ENCODE measurements at regions of chr1 and their contacts with region 1.

Region 1: GRCh38 chr1:89780721-89781120 is 40.1 kb upstream of the LRRC8D start:
- DNase-seq: peak; percentile 39
- ATAC-seq: peak; percentile 92
- H3K4me3 ChIP-seq: no peak overlapping the region
- H3K27ac ChIP-seq: no peak overlapping the region
- H3K4me1 ChIP-seq: no peaks in the 10 kb centered on the region; a peak in 1 of 4 replicates
- H3K27me3 ChIP-seq: no peaks in the 10 kb centered on the region
- CTCF ChIP-seq: peak; percentile 29 to 61 (median 54); a peak in 5 of 6 replicates
- POLR2A ChIP-seq: no peak
- RAD21 ChIP-seq: peak; percentile 77

Region 2: DNA sequence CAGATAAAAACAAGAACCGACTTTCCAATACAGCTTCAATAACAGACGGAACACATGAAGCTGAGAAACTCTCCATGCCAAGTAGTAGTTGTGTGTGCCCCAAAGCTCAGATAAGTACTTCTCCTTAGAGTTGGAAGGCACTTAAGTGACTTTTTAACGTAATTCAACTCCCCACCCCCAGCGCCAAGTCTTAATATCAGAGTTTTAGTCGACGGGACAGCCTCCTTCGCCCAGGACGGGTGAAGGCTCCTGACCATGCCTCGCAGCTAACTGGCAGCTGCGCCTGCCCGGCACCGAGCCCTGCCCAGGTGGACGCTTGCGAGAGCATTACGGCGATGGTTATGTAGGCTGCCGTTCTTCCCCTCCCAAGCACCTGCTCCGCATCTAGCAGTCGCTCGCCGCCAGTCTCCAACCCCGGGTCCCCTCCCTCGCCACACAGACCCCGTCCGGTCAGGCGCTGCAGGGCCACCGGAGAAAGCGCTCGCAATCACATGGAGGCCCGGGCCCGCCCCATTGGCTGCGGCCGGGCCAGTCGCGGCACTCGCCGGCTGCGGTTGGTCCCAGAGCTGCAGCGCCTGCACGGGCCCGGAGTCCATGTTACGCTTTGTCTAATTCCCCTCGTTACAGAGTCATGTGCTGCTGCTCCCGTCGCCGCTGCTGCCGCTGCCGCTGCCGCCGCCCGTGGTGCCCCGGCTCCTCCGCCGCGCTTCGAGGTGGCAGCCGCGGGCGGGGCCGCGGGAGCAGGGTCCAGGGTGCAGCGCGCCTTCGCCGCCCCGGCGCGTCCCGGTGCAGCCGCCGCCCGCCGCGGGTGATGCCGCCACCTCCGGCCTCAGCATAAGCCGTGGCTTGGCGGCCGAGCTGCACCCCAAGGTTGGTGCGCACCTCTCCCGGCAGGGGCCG is 40.0 kb after region 1 on chr1 and contains the start of gene LRRC8D:
- CTCF ChIA-PET with region 1: no interaction called
- POLR2A ChIA-PET with region 1: no interaction called
- RAD21 ChIA-PET with region 1: no interaction called
- intact Hi-C with region 1: no loop called
- DNase-seq: peak; percentile 58
- ATAC-seq: peak; percentile 93
- H3K4me3 ChIP-seq: peak within 1 kb of the TSS; percentile 71 to 74
- H3K27ac ChIP-seq: peak within 1 kb of the TSS; percentile 55
- H3K4me1 ChIP-seq: peaks cover 4 to 19% of the 10 kb centered on the region in 2 experiments; a peak in 3 of 4 replicates
- H3K27me3 ChIP-seq: no peaks in the 10 kb centered on the region
- CTCF ChIP-seq: no peak
- POLR2A ChIP-seq: no peak
- RAD21 ChIP-seq: no peak
- total RNA-seq, gene LRRC8D: 15.0 TPM

Region 3: GRCh38 chr1:90114521-90115141 is 333.9 kb after region 1 on chr1:
- CTCF ChIA-PET with region 1: no interaction called
- POLR2A ChIA-PET with region 1: no interaction called
- RAD21 ChIA-PET with region 1: interaction called in 1 of 2 experiments, 3 read pairs
- intact Hi-C with region 1: loop called (anchors 5 kb)
- DNase-seq: peak; percentile 56
- ATAC-seq: peak; percentile 74; the same call in 1 of the 2 replicates
- H3K4me3 ChIP-seq: no peak overlapping the region
- H3K27ac ChIP-seq: no peak overlapping the region
- H3K4me1 ChIP-seq: no peaks in the 10 kb centered on the region
- H3K27me3 ChIP-seq: peaks cover 44% of the 10 kb centered on the region
- CTCF ChIP-seq: peak; percentile 53 to 81 (median 69); a peak in 5 of 6 replicates
- POLR2A ChIP-seq: no peak
- RAD21 ChIP-seq: peak; percentile 75

Measured in HCT116 (cell line).